Activated CD8-positive, alpha-beta T cell treated with anti-CD3 and anti-CD28 coated beads for 36 hours (primary cell): ENCODE measurements at regions of chr1 and their contacts with region 1.

Region 1: DNA sequence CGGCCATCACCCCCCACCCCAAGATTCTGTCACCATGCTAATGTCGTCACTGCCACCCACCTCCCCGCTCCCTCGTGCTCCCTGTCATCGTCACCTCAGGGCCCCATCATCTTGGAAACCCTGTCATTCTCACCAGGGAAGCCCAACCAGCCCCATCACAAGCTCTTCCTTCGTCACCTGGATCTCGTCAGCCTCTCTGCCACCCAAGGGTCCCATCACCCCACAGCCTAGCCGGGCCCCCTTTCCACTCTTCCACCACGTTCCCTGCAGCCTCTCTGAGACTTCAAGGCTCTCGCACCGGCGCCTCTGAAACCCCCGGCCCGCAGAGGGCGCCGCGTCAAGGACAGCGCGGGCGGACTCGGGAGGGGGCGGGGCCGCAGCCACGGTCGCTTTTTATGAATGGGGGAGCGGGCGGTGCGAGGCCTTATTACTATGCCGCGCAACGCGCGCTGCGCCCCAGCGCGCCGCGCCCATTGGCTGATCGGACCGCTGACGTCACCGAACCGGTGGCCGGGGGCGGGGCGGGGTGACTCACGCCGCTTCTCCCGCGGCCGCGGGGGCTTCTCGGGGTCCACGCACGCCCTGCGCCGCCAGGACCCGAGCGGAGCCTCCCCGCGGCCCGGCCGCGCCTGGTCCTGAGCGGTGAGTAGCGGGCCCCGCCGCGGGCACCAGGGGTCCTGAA is at the start of gene GPR3:
- DNase-seq: peak; percentile 96
- ATAC-seq: peak; percentile 92
- H3K4me3 Mint-ChIP-seq: peak within 1 kb of the TSS; percentile 65
- H3K27ac Mint-ChIP-seq: peak within 1 kb of the TSS; percentile 89
- H3K4me1 Mint-ChIP-seq: peaks cover 17% of the 10 kb centered on the region
- H3K27me3 Mint-ChIP-seq: no peaks in the 10 kb centered on the region
- CTCF ChIP-seq: peak; percentile 43
- total RNA-seq, gene GPR3: 1.1 to 1.7 TPM

Region 2: DNA sequence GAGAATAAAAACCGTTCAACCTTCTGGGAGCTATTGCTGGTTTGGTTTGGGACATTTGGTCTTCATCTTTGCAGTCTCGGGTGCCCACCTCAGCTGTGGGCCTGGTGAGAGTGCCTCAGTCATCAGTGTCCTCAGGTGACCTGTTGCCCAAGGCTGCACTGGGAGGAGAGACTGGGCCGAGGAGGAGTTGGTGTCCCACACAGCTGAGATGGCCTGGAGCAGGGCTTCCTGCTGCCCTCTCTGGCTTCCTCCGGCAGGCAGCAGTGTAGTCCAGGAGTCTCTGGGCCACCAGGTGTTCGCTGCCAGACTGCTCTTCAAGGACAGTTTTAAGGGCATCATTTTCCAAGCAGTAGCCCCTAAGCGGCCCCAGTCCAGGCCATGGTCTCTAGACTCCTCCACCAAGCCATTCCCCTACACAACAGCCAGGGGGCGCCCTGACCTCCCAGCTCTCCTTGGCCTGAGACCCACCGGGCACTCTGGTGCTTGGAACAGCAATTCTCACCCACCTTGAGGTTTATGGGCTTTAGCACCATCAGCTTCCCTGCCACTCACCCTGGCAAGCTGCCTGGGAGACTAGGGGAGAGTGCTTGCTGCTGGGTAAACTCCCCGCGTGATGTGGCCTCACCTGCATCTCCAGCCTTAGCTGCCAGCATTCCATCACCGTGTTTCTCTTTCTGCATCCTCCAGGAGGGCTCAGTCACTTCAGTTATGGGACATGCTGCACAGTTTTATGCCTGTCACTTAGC is 59.5 kb before region 1 on chr1:
- CTCF ChIA-PET with region 1: interaction called, 50 read pairs
- POLR2A ChIA-PET with region 1: no interaction called
- intact Hi-C with region 1: no loop called
- DNase-seq: peak; percentile 73
- ATAC-seq: peak; percentile 91
- H3K4me3 Mint-ChIP-seq: no peak overlapping the region
- H3K27ac Mint-ChIP-seq: no peak overlapping the region
- H3K4me1 Mint-ChIP-seq: peaks cover 27% of the 10 kb centered on the region
- H3K27me3 Mint-ChIP-seq: no peaks in the 10 kb centered on the region
- CTCF ChIP-seq: peak; percentile 94

Region 3: DNA sequence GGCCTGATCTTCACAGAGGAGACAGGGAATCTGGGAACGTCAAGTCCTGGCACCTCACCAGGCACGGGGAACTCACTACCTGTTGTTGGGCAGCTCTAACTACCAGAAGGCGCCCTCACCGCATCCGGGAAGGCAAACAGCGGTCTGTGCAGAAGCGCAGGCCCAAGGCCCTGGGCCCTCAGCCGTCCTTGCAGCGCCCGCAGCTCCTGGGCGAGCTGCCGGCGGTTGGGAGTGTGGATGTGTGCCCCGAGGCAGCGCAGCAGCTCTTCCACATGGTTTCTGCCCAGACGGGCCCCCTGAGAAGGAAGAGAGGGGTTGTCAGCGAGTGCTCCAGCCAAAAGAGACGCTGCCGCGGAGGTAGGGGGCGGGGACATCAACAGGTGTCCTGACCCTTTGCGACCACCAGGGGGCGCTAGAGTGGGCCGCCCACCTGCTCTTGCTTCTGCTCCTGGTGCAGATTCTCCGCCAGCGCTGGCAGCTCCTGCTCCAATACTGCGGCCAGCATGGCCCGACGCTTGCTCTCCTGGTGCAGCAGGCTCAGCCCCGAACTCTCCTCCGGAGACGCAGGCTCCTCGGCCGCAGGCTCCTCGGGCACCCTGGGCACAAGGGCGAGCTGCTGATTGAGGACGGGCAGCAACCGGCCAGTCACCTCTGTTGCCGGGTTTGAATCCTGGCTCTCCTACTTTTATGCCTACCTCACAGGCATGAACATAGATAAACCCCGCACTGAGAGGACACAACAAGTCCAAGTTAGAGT is 34.8 kb before region 1 on chr1:
- CTCF ChIA-PET with region 1: interaction called, 75 read pairs
- POLR2A ChIA-PET with region 1: interaction called, 11 read pairs
- intact Hi-C with region 1: no loop called
- DNase-seq: peak; percentile 89
- ATAC-seq: peak; percentile 67
- H3K4me3 Mint-ChIP-seq: peak overlapping the region; percentile 75
- H3K27ac Mint-ChIP-seq: peak overlapping the region; percentile 90
- H3K4me1 Mint-ChIP-seq: peaks cover 44% of the 10 kb centered on the region
- H3K27me3 Mint-ChIP-seq: peaks cover 2% of the 10 kb centered on the region
- CTCF ChIP-seq: peak; percentile 99

Region 4: DNA sequence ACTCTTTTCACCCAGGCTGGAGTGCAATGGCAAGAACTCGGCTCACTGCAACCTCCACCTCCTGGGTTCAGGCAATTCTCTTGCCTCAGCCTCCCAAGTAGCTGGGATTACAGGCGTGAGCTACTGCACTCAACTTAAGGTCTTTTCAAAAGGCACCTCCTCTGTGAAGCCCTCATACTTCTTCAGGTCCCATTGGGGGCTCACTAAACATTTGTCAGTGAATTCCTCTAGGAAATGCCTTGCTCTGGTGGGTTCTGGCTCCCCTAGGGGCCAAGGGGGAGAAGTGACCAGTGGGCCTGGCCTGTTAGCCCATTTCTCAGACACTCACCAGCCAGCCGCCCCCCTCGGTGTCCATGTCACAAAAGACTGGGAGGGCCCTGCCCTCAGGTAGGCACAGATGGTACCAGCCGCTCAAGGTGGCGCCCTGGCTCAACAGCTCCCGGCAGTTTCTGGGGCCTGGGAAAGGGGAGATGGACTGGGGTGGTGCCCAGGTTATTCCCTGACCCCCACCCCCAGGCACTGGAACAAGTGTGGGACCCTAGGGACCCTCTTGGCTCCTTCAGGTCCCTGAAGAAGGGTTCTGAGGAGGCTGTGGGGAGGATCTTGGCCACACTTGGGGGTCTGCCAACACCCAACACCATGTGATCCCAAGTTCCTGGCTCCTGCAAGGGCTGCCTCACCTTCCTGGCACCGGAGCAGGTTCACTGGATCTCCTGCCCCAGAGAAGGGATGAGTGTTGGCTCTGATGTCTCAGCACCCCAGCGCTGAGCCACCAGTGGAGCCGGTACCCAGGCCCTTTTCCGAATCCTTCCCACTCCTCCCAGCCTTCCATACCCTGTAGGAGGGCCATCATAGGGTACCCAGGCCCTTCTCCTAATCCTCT is 19.2 kb before region 1 on chr1:
- CTCF ChIA-PET with region 1: interaction called, 10 read pairs
- POLR2A ChIA-PET with region 1: no interaction called
- intact Hi-C with region 1: no loop called
- DNase-seq: no peak
- ATAC-seq: no peak
- H3K4me3 Mint-ChIP-seq: no peak overlapping the region
- H3K27ac Mint-ChIP-seq: no peak overlapping the region
- H3K4me1 Mint-ChIP-seq: peaks cover 8% of the 10 kb centered on the region
- H3K27me3 Mint-ChIP-seq: no peaks in the 10 kb centered on the region
- CTCF ChIP-seq: no peak

Region 5: DNA sequence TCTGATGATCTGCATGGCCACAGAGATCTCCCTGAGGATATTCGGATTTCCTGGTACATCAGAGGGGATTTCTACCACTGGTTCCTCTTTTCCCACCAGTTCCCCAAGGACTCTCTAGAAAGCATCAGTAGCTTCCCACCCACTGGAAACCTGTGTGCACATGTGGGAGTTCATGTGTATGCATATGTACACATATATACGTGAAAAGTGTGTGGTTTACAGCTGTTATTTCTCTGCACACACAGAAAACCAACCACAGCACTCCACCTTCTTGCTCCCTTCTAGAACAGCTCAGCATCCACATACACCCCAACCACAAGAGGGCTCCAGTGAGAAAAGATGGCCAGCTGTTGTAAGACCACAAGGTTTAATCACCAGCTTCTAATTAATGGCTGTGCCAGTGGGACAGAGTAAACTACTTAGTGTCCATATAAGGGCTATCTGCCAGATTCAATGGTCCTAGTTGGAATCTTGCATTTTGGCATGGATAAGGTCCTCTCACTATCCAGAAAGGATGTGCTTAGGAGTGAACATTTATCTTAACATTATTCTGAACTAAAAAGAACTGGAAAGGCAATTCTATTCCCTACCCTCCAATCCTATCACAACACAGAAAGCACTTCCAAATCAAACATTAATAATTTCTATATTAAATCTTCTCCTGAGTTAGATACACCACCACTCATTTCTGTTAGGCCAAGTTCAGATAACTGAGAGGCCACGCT is 24.3 kb after region 1 on chr1:
- CTCF ChIA-PET with region 1: interaction called, 25 read pairs
- POLR2A ChIA-PET with region 1: no interaction called
- intact Hi-C with region 1: no loop called
- DNase-seq: peak; percentile 71
- ATAC-seq: peak; percentile 49
- H3K4me3 Mint-ChIP-seq: no peak overlapping the region
- H3K27ac Mint-ChIP-seq: peak overlapping the region; percentile 7
- H3K4me1 Mint-ChIP-seq: peaks cover 34% of the 10 kb centered on the region
- H3K27me3 Mint-ChIP-seq: no peaks in the 10 kb centered on the region
- CTCF ChIP-seq: peak; percentile 64

Region 6: DNA sequence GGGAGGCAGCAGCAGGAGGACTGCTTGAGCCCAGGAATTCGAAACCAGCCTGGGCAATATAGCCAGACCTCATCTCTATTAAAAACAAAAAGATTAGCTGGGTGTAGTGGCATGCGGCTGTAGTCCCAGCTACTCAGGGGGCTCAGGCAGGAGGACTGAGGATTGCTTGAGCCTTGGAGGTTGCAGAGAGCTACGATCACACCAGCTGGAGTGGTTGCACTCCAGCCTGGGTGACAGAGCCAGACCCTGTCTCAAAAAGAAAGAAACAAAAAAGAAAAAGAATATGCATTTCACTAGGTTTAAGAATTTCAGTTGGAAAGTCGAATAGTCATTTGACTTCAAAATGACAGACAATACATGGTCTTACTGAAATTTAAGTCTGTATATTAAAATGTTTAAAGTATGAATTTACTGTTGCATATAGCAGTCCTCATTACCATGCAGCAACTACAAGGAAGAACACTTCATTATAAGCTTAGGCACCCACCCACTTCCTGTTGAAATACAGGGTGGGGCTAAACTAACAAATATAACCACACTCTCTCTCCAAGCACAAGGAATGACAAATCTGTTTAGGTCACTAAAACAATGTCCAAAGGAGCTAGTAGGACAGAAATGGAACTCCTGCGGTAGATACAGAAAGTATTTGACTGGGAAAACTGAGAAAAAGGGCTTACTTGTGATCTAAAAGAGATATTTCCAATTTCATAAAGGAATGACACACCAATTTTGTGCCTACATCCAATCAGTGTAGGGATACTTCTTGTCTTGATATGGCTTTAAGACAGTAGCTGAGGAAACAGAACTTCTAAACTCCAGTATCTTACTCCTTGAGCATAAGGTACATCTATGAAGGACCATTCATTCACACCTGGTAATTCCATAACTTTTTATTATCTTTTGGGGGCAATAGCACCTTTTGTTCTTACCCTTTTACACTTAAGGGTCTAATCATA is 44.2 kb after region 1 on chr1:
- CTCF ChIA-PET with region 1: no interaction called
- POLR2A ChIA-PET with region 1: no interaction called
- intact Hi-C with region 1: no loop called
- DNase-seq: no peak
- ATAC-seq: peak; percentile 77
- H3K4me3 Mint-ChIP-seq: no peak overlapping the region
- H3K27ac Mint-ChIP-seq: peak overlapping the region; percentile 71
- H3K4me1 Mint-ChIP-seq: peaks cover 71% of the 10 kb centered on the region
- H3K27me3 Mint-ChIP-seq: no peaks in the 10 kb centered on the region
- CTCF ChIP-seq: no peak

Region 7: DNA sequence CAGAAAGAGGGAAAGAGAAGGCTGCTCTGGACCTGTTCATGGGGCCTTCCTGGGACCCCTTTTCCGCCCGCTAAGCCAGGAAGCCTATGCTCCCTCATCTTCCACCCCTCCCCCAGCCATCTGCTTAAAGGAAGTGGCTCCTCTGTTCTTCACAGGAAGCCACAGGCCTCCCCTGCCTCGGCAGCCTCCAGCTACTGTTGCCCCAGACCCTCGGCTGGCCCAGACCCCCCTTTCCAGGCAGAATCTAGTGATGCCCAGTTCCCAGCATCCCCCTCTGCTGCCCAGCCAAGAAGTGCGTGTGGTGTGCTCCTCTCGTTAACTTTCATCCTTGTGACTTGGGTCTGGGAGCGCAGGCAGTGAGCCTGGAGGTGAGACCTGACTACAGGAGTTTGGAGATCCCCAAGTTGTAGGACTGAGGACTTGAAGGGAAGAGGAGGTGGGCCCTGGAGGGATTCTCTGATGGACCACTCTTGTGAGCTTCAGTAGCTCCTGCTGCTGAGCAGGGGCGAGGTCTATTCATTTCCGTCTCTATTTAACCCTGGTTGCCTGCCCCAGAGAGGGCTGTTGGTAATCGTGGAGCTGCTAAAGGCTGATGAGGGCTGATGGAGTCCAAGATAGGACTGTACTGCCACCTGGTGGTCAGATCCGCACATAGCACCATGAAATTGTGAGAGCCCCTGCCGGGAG is 270.6 kb after region 1 on chr1:
- CTCF ChIA-PET with region 1: interaction called, 9 read pairs
- POLR2A ChIA-PET with region 1: interaction called, 5 read pairs
- intact Hi-C with region 1: loop called (anchors 10 kb)
- DNase-seq: peak; percentile 96
- ATAC-seq: peak; percentile 80
- H3K4me3 Mint-ChIP-seq: peak overlapping the region; percentile 68
- H3K27ac Mint-ChIP-seq: peak overlapping the region; percentile 98
- H3K4me1 Mint-ChIP-seq: peaks cover 50% of the 10 kb centered on the region
- H3K27me3 Mint-ChIP-seq: no peaks in the 10 kb centered on the region
- CTCF ChIP-seq: peak; percentile 75

Region 8: DNA sequence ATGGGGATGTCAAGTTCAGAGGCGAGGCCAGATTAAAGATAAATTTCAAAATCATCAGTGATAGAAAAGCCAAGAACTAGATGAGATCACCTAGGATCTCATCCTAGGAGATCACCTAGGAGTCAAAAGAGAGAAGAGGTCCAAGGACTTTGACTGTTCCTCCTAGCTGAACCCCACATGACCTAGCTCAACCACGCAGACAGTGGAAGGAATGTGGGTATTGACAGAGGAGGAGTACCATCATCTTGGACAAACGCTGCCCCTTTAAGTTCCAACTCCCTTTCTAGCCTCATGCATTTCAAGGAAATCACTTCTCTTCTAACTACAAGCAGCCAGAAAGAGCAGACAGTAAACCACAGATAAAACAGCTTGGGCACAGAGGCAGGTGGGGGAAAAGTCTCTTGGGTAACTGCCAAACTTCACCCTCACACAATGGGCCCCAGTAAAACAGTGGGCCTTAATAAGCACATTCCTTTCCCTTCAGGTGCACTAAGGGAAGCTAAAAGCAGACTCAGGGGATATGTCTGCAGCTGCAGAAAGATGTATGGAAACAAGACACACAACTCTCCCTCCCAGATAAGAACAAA is 321.0 kb after region 1 on chr1:
- CTCF ChIA-PET with region 1: no interaction called
- POLR2A ChIA-PET with region 1: no interaction called
- intact Hi-C with region 1: no loop called
- DNase-seq: no peak
- ATAC-seq: no peak
- H3K4me3 Mint-ChIP-seq: no peak overlapping the region
- H3K27ac Mint-ChIP-seq: no peak overlapping the region
- H3K4me1 Mint-ChIP-seq: no peaks in the 10 kb centered on the region
- H3K27me3 Mint-ChIP-seq: peaks cover 13% of the 10 kb centered on the region
- CTCF ChIP-seq: no peak